Heart right ventricle (tissue), 16 donors: ENCODE measurements at regions of chr2 and their contacts with region 1.

Region 1: GRCh38 chr2:100427628-100428258 is 10.3 kb upstream of the CHST10 start:
- DNase-seq: peak in 1 of 2 donors; percentile 64
- ATAC-seq: peak in 6 of 8 donors; percentile 59 to 88 (median 77)
- H3K4me3 ChIP-seq: no peak overlapping the region
- H3K27ac ChIP-seq: no peak overlapping the region
- H3K4me1 ChIP-seq: peaks cover 0 to 3% (median 0%) of the 10 kb centered on the region in 9 donors
- H3K27me3 ChIP-seq: peaks cover 0 to 5% (median 0%) of the 10 kb centered on the region in 7 donors
- CTCF ChIP-seq: peak; percentile 6 to 63 (median 56)

Region 2: DNA sequence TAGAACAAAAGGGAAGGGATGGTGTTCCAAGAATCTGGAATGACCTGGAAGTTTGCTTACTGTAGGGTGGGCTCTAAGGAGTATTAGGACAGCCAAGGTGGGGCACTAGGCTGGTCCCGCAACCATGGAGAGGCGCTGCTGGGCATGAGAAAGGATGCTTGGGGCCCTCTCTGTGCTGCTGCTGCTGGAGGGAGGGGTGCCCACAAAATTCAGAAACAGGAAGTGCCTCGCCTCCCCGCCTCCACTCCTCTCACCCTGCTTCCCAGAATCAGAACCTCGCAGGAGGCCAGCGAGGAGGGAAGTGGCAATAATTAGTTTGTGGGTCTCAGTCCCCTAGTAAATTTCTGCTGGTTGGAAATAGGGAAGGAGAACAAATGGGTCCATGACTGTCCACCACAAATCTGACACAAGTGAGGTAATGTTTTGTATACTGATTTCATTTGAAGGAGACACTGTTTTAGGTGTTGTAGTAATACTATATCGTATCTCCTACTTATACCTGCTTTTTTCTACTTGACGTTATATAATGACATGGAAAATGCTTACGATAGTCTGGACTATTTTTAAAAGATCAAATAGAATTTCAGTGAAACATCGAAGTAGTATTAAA is 127.2 kb after region 1 on chr2:
- intact Hi-C with region 1: loop called in 4 of 10 experiments (anchors 5 to 10 kb)
- DNase-seq: peak in 1 of 2 donors; percentile 14
- ATAC-seq: no peak
- H3K4me3 ChIP-seq: no peak overlapping the region
- H3K27ac ChIP-seq: peak overlapping the region in 1 of 10 donors; percentile 53
- H3K4me1 ChIP-seq: peaks cover 0 to 19% (median 0%) of the 10 kb centered on the region in 9 donors
- H3K27me3 ChIP-seq: no peaks in the 10 kb centered on the region
- CTCF ChIP-seq: no peak